Naive thymus-derived CD8-positive, alpha-beta T cell (primary cell): ENCODE measurements at regions of chr5 and their contacts with region 1.

Region 1: GRCh38 chr5:179821581-179822432 is 1.1 kb downstream of the SQSTM1 start:
- DNase-seq: peak; percentile 82 to 94 (median 88)
- ATAC-seq: peak; percentile 57 to 68
- H3K4me3 Mint-ChIP-seq: peak overlapping the region; percentile 92 to 99 (median 95)
- H3K27ac Mint-ChIP-seq: peak overlapping the region; percentile 92 to 99 (median 98)
- H3K4me1 Mint-ChIP-seq: peaks cover 34 to 60% (median 60%) of the 10 kb centered on the region in 4 donors
- H3K27me3 Mint-ChIP-seq: peaks cover 0 to 2% (median 0%) of the 10 kb centered on the region in 5 donors

Region 2: GRCh38 chr5:179795863-179796833 is 25.7 kb before region 1 on chr5:
- POLR2A ChIA-PET with region 1: interaction called, 154 read pairs
- DNase-seq: peak; percentile 44 to 76 (median 60)
- ATAC-seq: peak; percentile 62 to 68
- H3K4me3 Mint-ChIP-seq: peak overlapping the region; percentile 62 to 82 (median 67)
- H3K27ac Mint-ChIP-seq: peak overlapping the region in 5 of 10 donors; percentile 8 to 68 (median 29)
- H3K4me1 Mint-ChIP-seq: peaks cover 18 to 37% (median 32%) of the 10 kb centered on the region in 4 donors
- H3K27me3 Mint-ChIP-seq: no peaks in the 10 kb centered on the region

Region 3: GRCh38 chr5:179806250-179807222 is 15.3 kb before region 1 on chr5 and contains the start of gene MGAT4B:
- POLR2A ChIA-PET with region 1: interaction called, 154 read pairs
- DNase-seq: peak in 7 of 10 donors; percentile 41 to 61 (median 54)
- ATAC-seq: peak; percentile 73 to 74
- H3K4me3 Mint-ChIP-seq: peak within 1 kb of the TSS; percentile 62 to 88 (median 78)
- H3K27ac Mint-ChIP-seq: peak within 1 kb of the TSS in 5 of 10 donors; percentile 15 to 78 (median 65)
- H3K4me1 Mint-ChIP-seq: peaks cover 22 to 40% (median 36%) of the 10 kb centered on the region in 4 donors
- H3K27me3 Mint-ChIP-seq: peaks cover 0 to 3% (median 0%) of the 10 kb centered on the region in 5 donors
- polyA plus RNA-seq, gene MGAT4B: 7.8 to 20.9 (median 13.5) TPM

Region 4: DNA sequence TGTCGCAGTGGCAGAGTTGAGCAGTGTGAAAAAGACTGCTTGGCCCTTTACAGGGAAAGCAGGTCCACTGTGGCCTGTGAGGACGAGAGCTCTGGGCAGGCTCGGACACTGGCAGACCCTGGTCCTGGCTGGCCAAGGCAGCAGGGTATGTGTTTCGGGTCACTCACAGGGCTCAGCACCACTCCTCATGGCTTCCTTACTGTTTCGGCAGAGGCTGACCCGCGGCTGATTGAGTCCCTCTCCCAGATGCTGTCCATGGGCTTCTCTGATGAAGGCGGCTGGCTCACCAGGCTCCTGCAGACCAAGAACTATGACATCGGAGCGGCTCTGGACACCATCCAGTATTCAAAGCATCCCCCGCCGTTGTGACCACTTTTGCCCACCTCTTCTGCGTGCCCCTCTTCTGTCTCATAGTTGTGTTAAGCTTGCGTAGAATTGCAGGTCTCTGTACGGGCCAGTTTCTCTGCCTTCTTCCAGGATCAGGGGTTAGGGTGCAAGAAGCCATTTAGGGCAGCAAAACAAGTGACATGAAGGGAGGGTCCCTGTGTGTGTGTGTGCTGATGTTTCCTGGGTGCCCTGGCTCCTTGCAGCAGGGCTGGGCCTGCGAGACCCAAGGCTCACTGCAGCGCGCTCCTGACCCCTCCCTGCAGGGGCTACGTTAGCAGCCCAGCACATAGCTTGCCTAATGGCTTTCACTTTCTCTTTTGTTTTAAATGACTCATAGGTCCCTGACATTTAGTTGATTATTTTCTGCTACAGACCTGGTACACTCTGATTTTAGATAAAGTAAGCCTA is 14.6 kb after region 1 on chr5:
- POLR2A ChIA-PET with region 1: interaction called, 12 read pairs
- DNase-seq: peak; percentile 38 to 78 (median 49)
- ATAC-seq: peak; percentile 86 to 92
- H3K4me3 Mint-ChIP-seq: peak overlapping the region in 9 of 10 donors; percentile 22 to 61 (median 46)
- H3K27ac Mint-ChIP-seq: peak overlapping the region; percentile 79 to 96 (median 90)
- H3K4me1 Mint-ChIP-seq: peaks cover 15 to 23% (median 20%) of the 10 kb centered on the region in 4 donors
- H3K27me3 Mint-ChIP-seq: no peaks in the 10 kb centered on the region

Region 5: GRCh38 chr5:179858586-179859427 is 37.0 kb after region 1 on chr5 and contains the start of gene MRNIP:
- POLR2A ChIA-PET with region 1: interaction called, 10 read pairs
- DNase-seq: peak; percentile 80 to 90 (median 84)
- ATAC-seq: peak; percentile 93 to 95
- H3K4me3 Mint-ChIP-seq: peak within 1 kb of the TSS; percentile 88 to 99 (median 98)
- H3K27ac Mint-ChIP-seq: peak within 1 kb of the TSS; percentile 77 to 97 (median 95)
- H3K4me1 Mint-ChIP-seq: peaks cover 9 to 34% (median 23%) of the 10 kb centered on the region in 4 donors
- H3K27me3 Mint-ChIP-seq: no peaks in the 10 kb centered on the region
- polyA plus RNA-seq, gene MRNIP: 13.6 to 18.5 (median 15.5) TPM

Region 6: DNA sequence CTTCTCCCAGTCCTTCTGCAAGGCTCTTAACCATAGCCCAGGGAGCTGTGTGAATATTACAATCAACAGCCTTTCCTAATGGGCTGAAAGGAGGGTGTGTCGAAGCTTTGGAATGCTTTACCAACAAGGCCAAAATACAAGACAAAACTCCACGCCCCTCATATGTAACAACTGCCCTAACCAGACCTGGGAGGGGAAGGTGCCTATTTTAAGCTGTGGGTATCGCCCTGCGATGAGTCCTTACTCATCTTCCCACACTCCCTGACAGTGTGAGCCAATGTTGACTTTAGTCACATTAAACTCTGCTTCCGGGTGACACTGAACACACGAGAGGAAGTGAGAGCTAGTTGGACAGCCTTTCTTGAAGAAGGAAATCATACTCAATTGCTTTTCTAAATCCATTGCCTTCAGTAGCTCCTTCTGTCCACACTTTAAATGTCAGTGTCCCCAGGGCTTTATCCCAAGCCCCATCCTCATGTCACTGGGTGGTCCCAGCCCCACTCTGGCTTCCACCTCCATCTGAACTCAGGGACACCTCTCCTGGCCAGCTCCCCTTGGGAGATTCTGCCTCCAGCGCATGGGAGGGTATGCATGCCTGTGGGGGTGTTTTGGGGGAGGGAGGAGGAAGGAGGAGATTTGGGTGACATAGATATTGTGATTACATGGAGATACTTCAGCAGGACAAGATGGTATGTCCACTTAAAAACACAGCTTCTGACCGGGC is 92.4 kb after region 1 on chr5:
- POLR2A ChIA-PET with region 1: no interaction called
- DNase-seq: no peak
- ATAC-seq: no peak
- H3K4me3 Mint-ChIP-seq: no peak overlapping the region
- H3K27ac Mint-ChIP-seq: peak overlapping the region in 1 of 10 donors; percentile 67
- H3K4me1 Mint-ChIP-seq: peaks cover 1 to 10% (median 2%) of the 10 kb centered on the region in 4 donors
- H3K27me3 Mint-ChIP-seq: peaks cover 0 to 9% (median 0%) of the 10 kb centered on the region in 5 donors

Region 7: DNA sequence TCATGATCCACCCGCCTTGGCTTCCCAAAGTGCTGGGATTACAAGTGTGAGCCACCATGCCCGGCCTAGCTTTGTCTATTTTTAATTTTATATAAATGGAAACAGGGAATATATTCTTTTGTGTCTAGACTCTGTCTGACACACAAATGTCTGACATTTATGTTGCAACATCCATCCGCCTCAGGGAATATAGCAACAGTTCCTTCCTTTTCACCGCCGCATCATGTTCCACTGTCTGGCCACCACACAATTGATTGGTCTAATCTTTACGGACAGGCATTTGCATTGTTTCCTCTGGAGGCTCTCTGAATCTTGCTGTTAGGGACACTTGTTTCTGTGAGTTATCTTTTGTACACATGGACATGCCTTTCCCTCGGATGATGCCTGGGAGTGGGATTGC is 106.0 kb after region 1 on chr5:
- POLR2A ChIA-PET with region 1: no interaction called
- DNase-seq: no peak
- ATAC-seq: no peak
- H3K4me3 Mint-ChIP-seq: no peak overlapping the region
- H3K27ac Mint-ChIP-seq: no peak overlapping the region
- H3K4me1 Mint-ChIP-seq: peaks cover 0 to 3% (median 0%) of the 10 kb centered on the region in 4 donors
- H3K27me3 Mint-ChIP-seq: peaks cover 0 to 1% (median 0%) of the 10 kb centered on the region in 5 donors

Region 8: DNA sequence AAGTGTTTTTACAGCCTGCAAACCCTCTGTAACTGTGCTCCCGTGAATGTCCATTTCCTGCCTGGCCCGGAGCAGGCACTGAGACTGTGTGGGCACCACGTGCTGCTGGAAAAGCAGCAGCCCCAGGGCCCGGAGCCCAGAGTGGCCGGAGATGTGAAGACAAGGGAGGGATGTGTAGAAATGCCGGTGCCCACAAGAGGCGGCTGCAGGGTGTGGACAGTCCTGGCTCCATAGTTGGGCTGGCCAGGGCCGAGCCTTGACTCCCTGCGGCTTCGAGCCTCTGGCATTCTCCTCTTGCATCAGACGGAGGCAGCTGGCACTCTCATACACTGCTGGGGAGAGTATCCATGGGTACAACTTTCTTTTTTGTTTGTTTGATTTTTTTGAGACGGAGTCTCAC is 544.5 kb after region 1 on chr5:
- POLR2A ChIA-PET with region 1: no interaction called
- DNase-seq: no peak
- ATAC-seq: no peak
- H3K4me3 Mint-ChIP-seq: no peak overlapping the region
- H3K27ac Mint-ChIP-seq: no peak overlapping the region
- H3K4me1 Mint-ChIP-seq: peaks cover 0 to 5% (median 0%) of the 10 kb centered on the region in 4 donors
- H3K27me3 Mint-ChIP-seq: peaks cover 0 to 7% (median 0%) of the 10 kb centered on the region in 5 donors